Kidney (tissue), 22 donors: ENCODE measurements at regions of chr3 and their contacts with region 1.

Region 1: DNA sequence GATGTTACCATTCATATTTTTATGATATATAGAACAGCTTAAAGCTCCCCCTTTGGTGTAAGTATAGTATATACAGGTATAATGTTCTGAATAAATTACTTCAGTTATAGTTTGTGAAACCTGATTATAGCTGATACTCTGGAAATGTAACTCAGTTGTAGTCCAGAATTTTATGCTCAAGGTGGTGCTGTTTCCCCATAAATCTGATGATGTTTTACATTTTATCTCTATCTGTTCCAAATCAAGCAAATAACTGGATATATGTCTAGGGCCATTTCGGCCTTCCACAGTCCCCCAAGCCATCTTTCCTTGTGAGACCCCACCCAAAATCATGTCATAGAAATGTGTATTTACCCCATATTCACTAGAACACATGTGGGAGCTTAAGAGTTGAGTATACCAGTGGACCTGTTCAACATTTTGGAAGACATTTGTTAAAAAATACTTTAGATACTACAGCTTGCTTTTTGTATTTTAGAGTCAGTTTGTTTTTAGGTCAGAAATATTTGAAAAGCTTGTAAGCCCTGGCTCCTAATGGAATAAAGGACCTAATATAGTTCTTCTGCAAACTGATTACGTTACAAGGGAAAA is 107.1 kb downstream of the ATG7 start:
- DNase-seq: peak in 3 of 5 donors; percentile 17 to 80 (median 76)
- H3K4me3 ChIP-seq: peak overlapping the region in 1 of 3 donors; percentile 15
- H3K27ac ChIP-seq: peak overlapping the region in 1 of 2 donors; percentile 68
- H3K4me1 ChIP-seq: peaks cover 0 to 4% (median 3%) of the 10 kb centered on the region in 3 donors
- H3K27me3 ChIP-seq: no peaks in the 10 kb centered on the region
- CTCF ChIP-seq: peak; percentile 64

Region 2: DNA sequence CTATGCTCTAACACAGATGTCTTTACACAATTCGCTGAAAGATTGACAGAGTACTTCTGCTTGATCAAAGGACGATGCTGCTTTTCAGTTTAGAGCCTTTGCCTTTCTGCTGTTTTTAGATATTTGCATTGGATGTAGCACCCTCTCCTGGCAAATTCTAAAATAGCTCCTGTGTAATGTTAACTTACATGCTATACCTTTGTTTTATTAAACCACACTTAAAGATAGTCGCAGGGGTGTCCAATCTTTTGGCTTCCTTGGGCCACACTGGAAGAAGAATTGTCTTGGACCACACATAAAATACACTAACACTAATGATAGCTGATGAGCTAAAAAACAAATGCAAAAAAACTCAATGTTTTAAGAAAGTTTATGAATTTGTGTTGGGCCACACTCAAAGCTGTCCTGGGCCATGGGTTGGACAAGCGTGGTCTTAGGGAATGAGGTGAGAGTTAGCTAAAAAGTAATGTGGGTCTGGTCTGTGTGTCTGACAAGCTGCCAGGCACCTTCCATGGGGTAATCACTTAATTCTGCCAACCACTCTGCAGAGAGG is 44.2 kb before region 1 on chr3:
- intact Hi-C with region 1: no loop called
- DNase-seq: peak in 3 of 5 donors; percentile 14 to 80 (median 73)
- H3K4me3 ChIP-seq: no peak overlapping the region
- H3K27ac ChIP-seq: no peak overlapping the region
- H3K4me1 ChIP-seq: no peaks in the 10 kb centered on the region
- H3K27me3 ChIP-seq: no peaks in the 10 kb centered on the region
- CTCF ChIP-seq: peak; percentile 84

Region 3: DNA sequence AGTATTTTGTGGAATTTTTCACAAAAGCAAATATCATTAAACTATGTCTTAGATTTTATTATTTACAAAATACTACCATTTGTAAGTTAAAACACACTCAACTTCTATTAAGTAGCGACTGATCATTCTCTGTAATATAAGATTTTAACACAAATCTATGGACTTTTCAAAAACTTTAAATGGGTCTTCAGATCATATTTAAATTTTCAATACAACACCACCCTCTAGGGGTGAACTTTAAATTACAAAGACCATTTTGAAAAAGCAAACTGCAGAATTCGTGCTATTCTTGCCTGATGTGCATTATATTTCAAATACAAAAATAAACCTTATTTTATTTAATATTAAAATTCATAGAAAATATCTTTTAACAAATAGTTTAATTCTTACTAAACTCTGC is 272.6 kb after region 1 on chr3:
- intact Hi-C with region 1: loop called (anchors 5 kb)
- DNase-seq: peak in 2 of 5 donors; percentile 59 to 71
- H3K4me3 ChIP-seq: no peak overlapping the region
- H3K27ac ChIP-seq: no peak overlapping the region
- H3K4me1 ChIP-seq: no peaks in the 10 kb centered on the region
- H3K27me3 ChIP-seq: no peaks in the 10 kb centered on the region
- CTCF ChIP-seq: peak; percentile 34

Region 4: DNA sequence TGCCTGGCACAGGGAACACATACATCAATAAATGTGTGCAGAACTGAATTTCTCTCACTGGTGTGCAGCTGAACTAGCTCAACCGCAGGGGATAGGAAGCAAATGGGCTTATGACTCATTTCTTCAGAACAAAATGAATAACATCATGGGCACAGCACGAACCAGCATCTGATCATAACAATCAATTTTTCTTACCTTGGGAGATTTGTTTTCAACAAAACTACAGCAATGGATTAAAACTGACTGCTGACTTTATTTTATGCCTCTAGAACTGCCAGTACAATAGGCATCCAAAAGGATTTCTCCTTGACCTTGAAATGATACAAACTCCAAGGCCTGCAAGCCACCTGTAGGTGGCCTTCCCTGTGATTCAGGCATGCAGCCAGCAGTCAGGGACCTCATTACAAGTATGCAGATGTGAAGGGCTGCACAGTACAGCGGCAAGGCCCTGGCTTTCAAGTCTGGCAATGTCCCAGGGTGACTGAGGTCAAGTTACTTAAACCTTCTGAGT is 441.3 kb after region 1 on chr3:
- intact Hi-C with region 1: loop called (anchors 10 kb)
- DNase-seq: peak in 1 of 5 donors; percentile 26
- H3K4me3 ChIP-seq: no peak overlapping the region
- H3K27ac ChIP-seq: no peak overlapping the region
- H3K4me1 ChIP-seq: peaks cover 0 to 4% (median 0%) of the 10 kb centered on the region in 3 donors
- H3K27me3 ChIP-seq: no peaks in the 10 kb centered on the region
- CTCF ChIP-seq: no peak